Naive thymus-derived CD4-positive, alpha-beta T cell (primary cell): ENCODE measurements at regions of chr10 and their contacts with region 1.

Region 1: GRCh38 chr10:12588120-12588860 is 238.9 kb downstream of the CAMK1D start:
- DNase-seq: peak in 7 of 9 donors; percentile 40 to 76 (median 71)
- ATAC-seq: peak; percentile 81
- H3K4me3 ChIP-seq: peak overlapping the region; percentile 36
- H3K4me3 Mint-ChIP-seq: peak overlapping the region; percentile 67 to 91 (median 86)
- H3K27ac ChIP-seq: no peak overlapping the region
- H3K27ac Mint-ChIP-seq: peak overlapping the region; percentile 41 to 92 (median 84)
- H3K4me1 ChIP-seq: peaks cover 18 to 41% of the 10 kb centered on the region in 2 donors
- H3K4me1 Mint-ChIP-seq: peaks cover 35 to 89% (median 79%) of the 10 kb centered on the region in 7 donors
- H3K27me3 ChIP-seq: no peaks in the 10 kb centered on the region
- H3K27me3 Mint-ChIP-seq: no peaks in the 10 kb centered on the region

Region 2: DNA sequence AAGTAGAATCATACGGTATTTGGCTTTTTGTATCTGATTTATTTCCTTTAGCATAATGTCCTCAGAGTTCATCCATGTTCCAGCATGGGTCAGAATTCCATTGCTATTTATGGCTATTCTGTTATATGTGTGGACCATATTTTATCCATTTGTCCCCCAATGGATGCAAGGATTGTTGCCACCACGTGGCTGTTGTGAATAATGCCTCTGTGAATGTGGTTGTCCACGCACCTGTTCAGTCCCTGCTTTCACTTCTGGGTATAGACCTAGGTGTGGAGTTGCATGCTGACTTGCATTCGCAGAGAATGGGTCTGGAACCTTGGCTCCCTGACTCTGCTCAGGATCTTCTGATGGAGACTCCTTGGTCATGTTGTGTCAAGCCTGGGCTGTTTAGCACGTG is 39.0 kb before region 1 on chr10:
- CTCF ChIA-PET with region 1: no interaction called
- POLR2A ChIA-PET with region 1: interaction called, 4 read pairs
- intact Hi-C with region 1: loop called in 1 of 2 experiments (anchors 5 kb)
- DNase-seq: no peak
- ATAC-seq: no peak
- H3K4me3 ChIP-seq: no peak overlapping the region
- H3K4me3 Mint-ChIP-seq: peak overlapping the region in 2 of 10 donors; percentile 17 to 45
- H3K27ac ChIP-seq: no peak overlapping the region
- H3K27ac Mint-ChIP-seq: peak overlapping the region in 6 of 9 donors; percentile 21 to 54 (median 39)
- H3K4me1 ChIP-seq: peaks cover 0 to 13% of the 10 kb centered on the region in 2 donors
- H3K4me1 Mint-ChIP-seq: peaks cover 21 to 54% (median 46%) of the 10 kb centered on the region in 7 donors
- H3K27me3 ChIP-seq: no peaks in the 10 kb centered on the region
- H3K27me3 Mint-ChIP-seq: no peaks in the 10 kb centered on the region

Region 3: DNA sequence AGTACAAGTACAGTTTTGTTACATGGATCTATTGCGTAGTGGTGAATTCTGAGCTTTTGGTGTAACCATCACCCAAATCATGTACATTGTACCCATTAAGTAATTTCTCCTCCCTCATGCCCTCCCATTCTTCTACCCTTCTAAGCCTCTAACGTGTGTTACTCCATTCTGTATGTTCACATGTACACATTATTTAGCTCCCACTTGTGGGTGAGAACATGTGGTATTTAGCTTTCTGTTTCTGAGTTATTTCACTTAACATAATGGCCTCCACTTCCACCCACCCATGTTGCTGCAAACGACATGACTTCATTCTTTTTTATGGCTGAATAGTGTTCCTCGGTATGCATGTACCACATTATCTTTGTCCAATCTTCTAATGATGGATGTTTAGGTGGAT is 12.4 kb after region 1 on chr10:
- CTCF ChIA-PET with region 1: interaction called, 3 read pairs
- POLR2A ChIA-PET with region 1: interaction called, 10 read pairs
- intact Hi-C with region 1: no loop called
- DNase-seq: no peak
- ATAC-seq: no peak
- H3K4me3 ChIP-seq: no peak overlapping the region
- H3K4me3 Mint-ChIP-seq: no peak overlapping the region
- H3K27ac ChIP-seq: no peak overlapping the region
- H3K27ac Mint-ChIP-seq: peak overlapping the region in 3 of 9 donors; percentile 34 to 62 (median 43)
- H3K4me1 ChIP-seq: peaks cover 4 to 37% of the 10 kb centered on the region in 2 donors
- H3K4me1 Mint-ChIP-seq: peaks cover 22 to 76% (median 60%) of the 10 kb centered on the region in 7 donors
- H3K27me3 ChIP-seq: no peaks in the 10 kb centered on the region
- H3K27me3 Mint-ChIP-seq: no peaks in the 10 kb centered on the region